ENCODE measurements at regions of chr11 and their contacts with region 1.

Region 1: DNA sequence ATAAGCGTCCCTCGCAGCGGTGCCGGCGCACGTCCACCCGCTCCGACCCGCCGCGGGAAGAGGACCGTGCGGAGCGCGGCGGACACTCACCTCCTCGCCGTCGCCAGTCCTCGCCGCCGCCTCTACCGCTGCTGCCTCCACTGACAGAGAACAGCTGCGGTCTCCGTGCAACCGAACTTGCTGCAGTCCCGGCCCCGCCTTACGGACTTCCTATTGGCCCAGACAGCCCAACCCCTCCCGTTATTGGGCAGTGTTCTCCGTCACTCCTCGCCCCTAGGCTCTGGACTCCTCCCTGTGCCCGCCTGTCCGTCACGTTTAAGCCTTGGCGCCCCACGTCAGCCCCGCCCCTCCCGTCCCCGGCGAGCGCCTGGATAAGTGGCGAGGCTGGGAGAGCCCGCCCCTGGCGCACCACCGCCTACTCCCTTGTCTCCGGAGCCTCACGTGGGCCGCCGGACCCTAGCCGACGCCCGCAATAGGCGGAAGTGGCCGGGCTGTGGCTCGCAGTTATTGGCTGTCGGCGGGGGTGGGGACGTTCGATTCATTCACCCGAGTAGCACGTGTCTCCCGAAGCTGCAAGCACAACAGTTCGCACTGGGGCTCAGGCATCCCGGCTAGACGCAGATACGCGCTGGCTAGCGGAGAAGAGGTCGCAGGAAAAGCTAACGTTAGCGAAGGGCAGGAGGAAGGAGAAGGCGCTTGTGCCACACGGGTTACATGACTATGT is at the start of gene PC:
- DNase-seq: peak; percentile 100
- H3K4me3 Mint-ChIP-seq: peak within 1 kb of the TSS; percentile 65
- H3K27ac Mint-ChIP-seq: peak within 1 kb of the TSS; percentile 70
- H3K4me1 Mint-ChIP-seq: peaks cover 30% of the 10 kb centered on the region
- H3K27me3 Mint-ChIP-seq: no peaks in the 10 kb centered on the region
- CTCF ChIP-seq: no peak
- total RNA-seq, gene PC: 27.0 and 37.7 TPM in 2 replicates

Region 2: GRCh38 chr11:66686801-66687750 is 271.3 kb before region 1 on chr11:
- CTCF ChIA-PET with region 1: no interaction called
- POLR2A ChIA-PET with region 1: no interaction called
- intact Hi-C with region 1: no loop called
- DNase-seq: no peak
- H3K4me3 Mint-ChIP-seq: no peak overlapping the region
- H3K27ac Mint-ChIP-seq: peak overlapping the region; percentile 12
- H3K4me1 Mint-ChIP-seq: no peaks in the 10 kb centered on the region
- H3K27me3 Mint-ChIP-seq: no peaks in the 10 kb centered on the region
- CTCF ChIP-seq: no peak

Region 3: GRCh38 chr11:66842896-66843775 is 115.3 kb before region 1 on chr11 and contains the start of gene RCE1:
- CTCF ChIA-PET with region 1: no interaction called
- POLR2A ChIA-PET with region 1: interaction called, 20 read pairs
- intact Hi-C with region 1: loop called (anchors 5 kb)
- DNase-seq: peak; percentile 86
- H3K4me3 Mint-ChIP-seq: peak within 1 kb of the TSS; percentile 82
- H3K27ac Mint-ChIP-seq: peak within 1 kb of the TSS; percentile 94
- H3K4me1 Mint-ChIP-seq: peaks cover 28% of the 10 kb centered on the region
- H3K27me3 Mint-ChIP-seq: no peaks in the 10 kb centered on the region
- CTCF ChIP-seq: no peak
- total RNA-seq, gene RCE1: 23.3 and 27.7 TPM in 2 replicates

Region 4: DNA sequence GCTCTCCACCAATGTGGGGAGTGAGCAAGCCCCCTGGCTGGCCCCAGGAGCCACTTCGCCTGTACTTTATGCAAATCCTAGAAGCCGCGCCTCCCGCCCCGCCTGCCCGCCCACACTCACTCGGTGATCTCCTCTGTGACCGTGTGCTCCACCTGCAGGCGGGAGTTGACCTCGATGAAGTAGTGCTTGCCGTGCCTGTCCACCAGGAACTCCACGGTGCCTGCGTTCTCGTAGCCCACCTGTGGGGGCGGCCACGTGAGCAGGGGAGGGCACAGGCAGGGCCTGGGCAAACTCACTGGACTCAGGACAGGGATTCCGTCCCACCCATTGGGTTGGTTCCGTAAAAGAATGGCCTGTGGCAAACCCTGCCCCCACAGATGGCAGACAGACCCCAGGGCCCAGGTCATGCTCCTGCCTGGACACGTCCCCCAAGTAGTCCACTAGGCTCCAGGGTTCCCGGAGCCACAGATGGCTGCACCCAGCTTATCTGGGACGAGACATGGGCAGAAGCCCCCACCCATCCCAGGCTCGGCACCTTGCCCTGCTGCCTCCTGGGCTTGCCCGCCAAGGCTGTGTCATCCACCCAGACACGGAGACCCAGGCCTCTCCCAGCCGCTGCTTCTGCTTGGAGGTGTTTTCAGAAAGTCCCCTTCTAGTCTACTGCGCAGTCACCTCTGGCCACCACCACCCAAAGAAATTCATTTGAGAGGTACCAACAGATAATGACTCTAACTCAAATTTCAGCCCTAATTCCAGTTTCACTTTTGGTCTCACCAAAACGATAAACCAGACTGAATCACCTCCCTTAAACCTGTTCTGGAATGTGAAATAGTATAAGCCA is 89.4 kb before region 1 on chr11:
- CTCF ChIA-PET with region 1: no interaction called
- POLR2A ChIA-PET with region 1: no interaction called
- intact Hi-C with region 1: no loop called
- DNase-seq: peak; percentile 71
- H3K4me3 Mint-ChIP-seq: no peak overlapping the region
- H3K27ac Mint-ChIP-seq: no peak overlapping the region
- H3K4me1 Mint-ChIP-seq: no peaks in the 10 kb centered on the region
- H3K27me3 Mint-ChIP-seq: no peaks in the 10 kb centered on the region
- CTCF ChIP-seq: peak; percentile 27

Region 5: DNA sequence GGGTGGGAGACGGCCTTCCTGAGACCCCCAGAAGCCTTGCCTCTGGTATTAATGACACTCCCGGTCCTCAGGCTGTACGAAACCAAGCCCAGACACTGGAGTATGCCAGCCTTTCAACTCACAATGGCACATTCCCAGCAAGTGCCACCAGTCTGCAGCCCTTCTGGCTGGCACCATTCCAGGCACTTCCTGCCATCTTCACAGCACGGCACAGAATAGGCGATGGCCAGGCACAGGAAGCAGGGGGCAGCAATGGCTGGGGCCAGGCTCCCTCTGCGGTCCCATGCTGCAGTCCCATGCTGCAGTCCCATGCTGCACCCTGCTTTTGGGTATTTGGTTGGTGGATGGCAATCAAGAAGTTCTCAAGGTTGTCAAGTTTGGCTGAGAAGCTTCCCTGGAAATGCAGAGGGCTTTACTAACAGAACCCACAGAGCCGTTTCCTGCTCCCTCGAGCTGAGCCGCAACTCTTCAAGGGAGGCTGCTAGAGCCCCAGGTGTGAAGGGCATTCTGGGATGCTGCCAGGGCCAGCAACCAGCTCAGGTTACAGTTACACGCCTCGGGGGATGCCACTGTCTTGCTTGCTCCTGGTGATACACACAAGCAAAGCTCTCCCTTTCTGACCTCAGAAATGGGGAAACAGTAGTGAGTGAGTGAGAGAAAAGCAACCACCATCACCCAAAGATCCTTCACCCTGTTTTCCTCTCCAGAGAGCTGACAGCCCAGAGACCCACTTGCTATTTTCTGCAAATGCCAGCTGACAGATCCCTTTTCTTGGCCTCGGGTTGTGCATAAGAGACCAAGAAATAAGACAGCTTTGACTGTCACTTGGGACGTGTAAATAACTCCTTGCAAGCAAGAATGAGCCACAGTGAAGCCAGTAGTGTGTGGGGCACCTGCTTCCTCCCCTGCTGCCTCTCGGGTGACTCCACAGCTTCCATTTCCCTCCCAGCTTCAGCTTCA is 77.6 kb before region 1 on chr11:
- CTCF ChIA-PET with region 1: interaction called, 3 read pairs
- POLR2A ChIA-PET with region 1: interaction called, 26 read pairs
- intact Hi-C with region 1: no loop called
- DNase-seq: peak; percentile 93
- H3K4me3 Mint-ChIP-seq: no peak overlapping the region
- H3K27ac Mint-ChIP-seq: peak overlapping the region; percentile 54
- H3K4me1 Mint-ChIP-seq: peaks cover 46% of the 10 kb centered on the region
- H3K27me3 Mint-ChIP-seq: no peaks in the 10 kb centered on the region
- CTCF ChIP-seq: no peak

Region 6: DNA sequence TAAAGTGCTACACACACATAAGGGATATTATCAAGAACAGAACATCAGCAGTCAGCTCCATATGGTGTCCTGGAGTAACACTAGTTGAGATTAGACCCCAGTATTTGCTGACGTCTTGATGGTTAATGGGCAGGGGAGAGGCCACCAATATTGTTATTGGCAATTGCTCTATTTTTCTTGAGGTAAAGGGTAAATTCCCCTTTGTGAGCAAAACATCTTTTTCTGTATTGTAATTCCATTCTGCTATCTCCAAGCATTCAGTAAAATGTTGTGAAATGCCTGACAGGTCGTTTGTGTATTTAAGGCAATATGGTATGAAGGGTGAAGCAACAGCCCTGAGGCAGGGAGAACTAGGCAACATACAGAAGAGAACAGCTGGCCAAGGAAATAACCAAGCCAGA is 22.1 kb before region 1 on chr11:
- CTCF ChIA-PET with region 1: interaction called, 4 read pairs
- POLR2A ChIA-PET with region 1: interaction called, 74 read pairs
- intact Hi-C with region 1: no loop called
- DNase-seq: peak; percentile 96
- H3K4me3 Mint-ChIP-seq: no peak overlapping the region
- H3K27ac Mint-ChIP-seq: peak overlapping the region; percentile 82
- H3K4me1 Mint-ChIP-seq: peaks cover 45% of the 10 kb centered on the region
- H3K27me3 Mint-ChIP-seq: no peaks in the 10 kb centered on the region
- CTCF ChIP-seq: no peak

Region 7: GRCh38 chr11:67027483-67028196 is 69.2 kb after region 1 on chr11:
- CTCF ChIA-PET with region 1: interaction called, 5 read pairs
- POLR2A ChIA-PET with region 1: interaction called, 12 read pairs
- intact Hi-C with region 1: no loop called
- DNase-seq: peak; percentile 71
- H3K4me3 Mint-ChIP-seq: no peak overlapping the region
- H3K27ac Mint-ChIP-seq: no peak overlapping the region
- H3K4me1 Mint-ChIP-seq: peaks cover 26% of the 10 kb centered on the region
- H3K27me3 Mint-ChIP-seq: no peaks in the 10 kb centered on the region
- CTCF ChIP-seq: no peak

Region 8: GRCh38 chr11:67136156-67136555 is 177.8 kb after region 1 on chr11:
- CTCF ChIA-PET with region 1: no interaction called
- POLR2A ChIA-PET with region 1: no interaction called
- intact Hi-C with region 1: no loop called
- DNase-seq: no peak
- H3K4me3 Mint-ChIP-seq: no peak overlapping the region
- H3K27ac Mint-ChIP-seq: no peak overlapping the region
- H3K4me1 Mint-ChIP-seq: peaks cover 7% of the 10 kb centered on the region
- H3K27me3 Mint-ChIP-seq: no peaks in the 10 kb centered on the region
- CTCF ChIP-seq: no peak

Measured in MCF 10A (cell line).